GM23248 (cell line): ENCODE measurements at regions of chr9 and their contacts with region 1.

Region 1: GRCh38 chr9:121067640-121068039 is 7.1 kb upstream of the CNTRL start:
- DNase-seq: no peak
- H3K4me3 ChIP-seq: no peak overlapping the region
- H3K27ac ChIP-seq: no peak overlapping the region
- H3K4me1 ChIP-seq: peaks cover 2% of the 10 kb centered on the region
- H3K27me3 ChIP-seq: no peaks in the 10 kb centered on the region

Region 2: GRCh38 chr9:120985810-120986222 is 81.8 kb before region 1 on chr9:
- in situ Hi-C with region 1: loop called (anchors 5 kb)
- DNase-seq: peak; percentile 76
- H3K4me3 ChIP-seq: no peak overlapping the region
- H3K27ac ChIP-seq: no peak overlapping the region
- H3K4me1 ChIP-seq: peaks cover 10% of the 10 kb centered on the region; the same call in 1 of the 2 replicates
- H3K27me3 ChIP-seq: no peaks in the 10 kb centered on the region